ENCODE measurements at regions of chr5 and their contacts with region 1.

Region 1: GRCh38 chr5:142655339-142656267 is 30.3 kb downstream of the FGF1 start:
- DNase-seq: peak; percentile 82
- H3K4me3 Mint-ChIP-seq: no peak overlapping the region
- H3K27ac Mint-ChIP-seq: no peak overlapping the region
- H3K4me1 Mint-ChIP-seq: no peaks in the 10 kb centered on the region
- H3K27me3 Mint-ChIP-seq: peaks cover 6% of the 10 kb centered on the region

Region 2: GRCh38 chr5:142006363-142007236 is 649.0 kb before region 1 on chr5:
- CTCF ChIA-PET with region 1: no interaction called
- POLR2A ChIA-PET with region 1: no interaction called
- intact Hi-C with region 1: no loop called
- DNase-seq: peak; percentile 58
- H3K4me3 Mint-ChIP-seq: peak overlapping the region; percentile 36
- H3K27ac Mint-ChIP-seq: peak overlapping the region; percentile 96
- H3K4me1 Mint-ChIP-seq: peaks cover 45% of the 10 kb centered on the region
- H3K27me3 Mint-ChIP-seq: no peaks in the 10 kb centered on the region

Region 3: GRCh38 chr5:142561486-142562097 is 94.0 kb before region 1 on chr5:
- CTCF ChIA-PET with region 1: no interaction called
- POLR2A ChIA-PET with region 1: no interaction called
- intact Hi-C with region 1: no loop called
- DNase-seq: no peak
- H3K4me3 Mint-ChIP-seq: no peak overlapping the region
- H3K27ac Mint-ChIP-seq: no peak overlapping the region
- H3K4me1 Mint-ChIP-seq: no peaks in the 10 kb centered on the region
- H3K27me3 Mint-ChIP-seq: no peaks in the 10 kb centered on the region

Region 4: GRCh38 chr5:142605611-142606010 is 50.0 kb before region 1 on chr5:
- CTCF ChIA-PET with region 1: interaction called, 23 read pairs
- POLR2A ChIA-PET with region 1: no interaction called
- intact Hi-C with region 1: loop called (anchors 2 kb)
- DNase-seq: no peak
- H3K4me3 Mint-ChIP-seq: no peak overlapping the region
- H3K27ac Mint-ChIP-seq: no peak overlapping the region
- H3K4me1 Mint-ChIP-seq: no peaks in the 10 kb centered on the region
- H3K27me3 Mint-ChIP-seq: peaks cover 10% of the 10 kb centered on the region

Region 5: GRCh38 chr5:142644640-142645361 is 10.8 kb before region 1 on chr5:
- CTCF ChIA-PET with region 1: interaction called, 39 read pairs
- POLR2A ChIA-PET with region 1: no interaction called
- intact Hi-C with region 1: no loop called
- DNase-seq: no peak
- H3K4me3 Mint-ChIP-seq: no peak overlapping the region
- H3K27ac Mint-ChIP-seq: no peak overlapping the region
- H3K4me1 Mint-ChIP-seq: no peaks in the 10 kb centered on the region
- H3K27me3 Mint-ChIP-seq: peaks cover 3% of the 10 kb centered on the region

Region 6: DNA sequence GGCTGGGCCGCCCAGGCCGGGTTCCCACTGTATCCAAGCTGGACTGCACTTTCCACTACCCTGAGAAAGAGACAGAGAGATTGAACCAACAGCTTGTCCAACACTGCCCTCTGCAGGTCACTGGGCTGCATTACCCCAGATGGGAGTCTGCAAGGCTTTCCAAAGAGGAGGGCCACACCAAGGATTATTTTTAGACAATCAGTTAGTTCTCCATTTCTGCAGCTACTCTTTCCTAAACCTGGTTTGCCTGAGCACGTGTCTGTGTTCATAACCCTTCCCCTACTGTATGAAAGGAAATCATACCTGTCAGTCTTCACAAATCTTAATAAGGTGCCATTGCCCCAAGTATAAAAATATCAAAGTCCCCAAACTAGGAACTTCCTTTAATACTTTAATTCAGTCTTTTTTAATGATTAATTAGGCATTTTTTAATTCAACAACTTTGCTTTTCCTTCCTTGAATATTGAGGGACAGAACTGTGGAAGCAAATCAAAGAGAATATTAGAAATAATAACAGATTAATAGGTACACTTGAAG is 43.6 kb after region 1 on chr5:
- CTCF ChIA-PET with region 1: interaction called, 100 read pairs
- POLR2A ChIA-PET with region 1: no interaction called
- intact Hi-C with region 1: loop called (anchors 1 kb)
- DNase-seq: peak; percentile 86
- H3K4me3 Mint-ChIP-seq: no peak overlapping the region
- H3K27ac Mint-ChIP-seq: no peak overlapping the region
- H3K4me1 Mint-ChIP-seq: no peaks in the 10 kb centered on the region
- H3K27me3 Mint-ChIP-seq: peaks cover 6% of the 10 kb centered on the region

Region 7: GRCh38 chr5:142888469-142889085 is 233.0 kb after region 1 on chr5:
- CTCF ChIA-PET with region 1: interaction called, 21 read pairs
- POLR2A ChIA-PET with region 1: no interaction called
- intact Hi-C with region 1: loop called (anchors 5 kb)
- DNase-seq: no peak
- H3K4me3 Mint-ChIP-seq: no peak overlapping the region
- H3K27ac Mint-ChIP-seq: no peak overlapping the region
- H3K4me1 Mint-ChIP-seq: no peaks in the 10 kb centered on the region
- H3K27me3 Mint-ChIP-seq: no peaks in the 10 kb centered on the region

Region 8: DNA sequence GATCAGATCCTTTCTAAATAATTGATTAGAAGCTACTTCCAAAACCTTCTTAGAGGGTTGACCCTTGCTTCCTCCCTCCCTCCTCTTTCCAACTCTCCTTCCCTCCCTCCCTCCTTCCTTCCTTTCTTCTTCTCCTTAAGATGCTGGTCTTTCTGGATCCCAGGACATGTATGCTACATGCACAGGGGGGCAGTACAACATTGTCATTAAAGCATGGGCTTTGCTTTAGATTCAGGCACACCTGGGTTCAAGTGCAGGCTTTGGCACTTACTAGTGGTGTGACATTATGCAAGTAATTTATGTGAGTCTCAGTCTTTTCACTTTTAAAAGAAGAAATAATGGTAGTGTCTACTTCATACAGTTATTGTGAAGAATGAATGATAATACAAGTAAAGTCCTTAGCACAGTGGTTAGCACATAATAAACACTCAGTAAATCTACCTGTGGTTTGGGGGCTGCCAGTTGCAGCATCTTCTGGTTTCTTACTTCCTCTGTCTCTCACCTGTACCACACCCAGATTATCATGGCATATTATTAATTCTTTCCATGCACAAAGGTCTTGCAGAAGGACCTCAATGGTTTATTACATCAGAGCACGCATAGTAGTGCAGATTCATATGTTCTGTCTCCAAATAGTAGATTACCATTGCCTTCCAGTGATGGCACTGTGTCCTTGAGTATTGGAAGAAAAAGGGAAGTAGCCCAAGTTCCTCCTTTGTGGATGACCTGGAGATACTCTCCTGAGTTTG is 268.7 kb after region 1 on chr5:
- CTCF ChIA-PET with region 1: no interaction called
- POLR2A ChIA-PET with region 1: no interaction called
- intact Hi-C with region 1: no loop called
- DNase-seq: no peak
- H3K4me3 Mint-ChIP-seq: no peak overlapping the region
- H3K27ac Mint-ChIP-seq: no peak overlapping the region
- H3K4me1 Mint-ChIP-seq: peaks cover 28% of the 10 kb centered on the region
- H3K27me3 Mint-ChIP-seq: no peaks in the 10 kb centered on the region